Left cardiac atrium (tissue), 4 donors: ENCODE measurements at regions of chr12 and their contacts with region 1.

Region 1: DNA sequence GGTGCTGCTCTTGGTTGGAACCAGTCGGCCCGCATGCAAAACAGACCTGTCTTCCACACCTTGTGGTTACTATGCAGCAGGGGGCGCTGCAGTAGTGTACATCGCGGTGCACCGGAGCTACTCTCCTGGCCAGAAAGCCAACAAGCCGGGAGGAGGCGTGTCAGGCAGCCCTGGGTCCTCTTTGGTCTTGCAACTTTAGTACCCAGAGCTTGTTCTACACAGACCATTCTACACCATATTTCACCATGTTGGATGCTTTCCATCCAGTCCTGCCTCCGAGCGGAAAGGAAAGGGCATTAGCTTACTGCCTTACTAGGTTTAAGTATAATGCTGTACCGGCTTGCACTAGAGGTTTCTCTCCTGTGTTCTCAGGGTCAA is 927 bp upstream of the TMTC2 start:
- DNase-seq: peak; percentile 96
- ATAC-seq: peak; percentile 85 to 89

Region 2: DNA sequence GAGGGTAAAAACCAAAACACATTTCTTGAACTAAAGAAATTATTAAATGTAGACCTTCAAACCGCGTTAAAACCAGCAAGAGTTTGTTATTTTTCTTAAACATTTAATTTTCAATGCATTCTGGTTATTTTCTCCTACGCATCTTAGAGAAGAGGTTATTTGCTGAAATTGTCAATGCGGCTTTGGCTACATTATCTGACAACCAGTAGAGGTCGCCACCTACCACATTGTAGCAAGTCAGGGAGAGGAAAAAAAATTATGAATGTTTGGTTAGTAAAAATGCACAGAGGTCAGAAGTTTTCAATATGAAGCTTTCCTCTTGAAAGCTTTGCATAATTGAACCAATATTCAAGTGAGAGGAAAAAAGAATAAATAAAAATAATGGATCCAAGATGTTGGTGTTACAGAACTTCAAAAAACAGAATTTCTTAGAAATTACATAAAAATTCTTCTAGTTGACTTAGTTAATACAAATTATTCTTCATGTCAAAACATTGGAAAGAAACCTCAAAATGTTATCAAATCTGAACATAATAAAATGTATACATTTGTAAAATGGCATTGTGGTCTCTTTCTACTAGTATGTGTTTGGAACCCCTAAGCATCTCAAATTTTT is 158.5 kb before region 1 on chr12:
- intact Hi-C with region 1: loop called in 1 of 2 experiments (anchors 5 kb)
- DNase-seq: no peak
- ATAC-seq: no peak

Region 3: DNA sequence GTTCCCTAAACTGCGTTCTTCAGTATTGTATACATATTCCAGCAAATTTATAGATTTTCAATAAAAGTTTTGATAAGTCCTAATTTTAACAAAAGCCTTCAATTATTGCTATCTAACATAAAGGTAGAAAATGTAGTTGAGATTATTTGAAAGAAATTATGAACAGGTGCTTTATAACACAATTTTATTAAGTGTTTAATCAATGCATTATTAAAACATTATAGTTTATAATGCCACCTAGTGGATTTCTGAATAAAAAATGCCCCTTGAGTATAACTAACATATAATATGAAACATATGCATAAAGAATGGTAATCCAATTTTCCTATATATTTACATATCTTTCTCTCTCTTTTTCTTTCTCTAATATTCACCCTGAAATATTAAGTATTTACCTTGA is 1711.5 kb after region 1 on chr12:
- intact Hi-C with region 1: loop called in 1 of 2 experiments (anchors 5 kb)
- DNase-seq: no peak
- ATAC-seq: no peak